ENCODE measurements at regions of chr6 and their contacts with region 1.

Region 1: GRCh38 chr6:11324453-11325015 is 92.1 kb upstream of the NEDD9 start:
- DNase-seq: no peak
- H3K4me3 ChIP-seq: no peak overlapping the region
- H3K27ac ChIP-seq: no peak overlapping the region
- H3K4me1 ChIP-seq: no peaks in the 10 kb centered on the region
- H3K27me3 ChIP-seq: no peaks in the 10 kb centered on the region
- CTCF ChIP-seq: no peak
- EP300 ChIP-seq: no peak
- POLR2A ChIP-seq: no peak

Region 2: GRCh38 chr6:11353921-11354389 is 29.4 kb after region 1 on chr6:
- intact Hi-C with region 1: no loop called
- DNase-seq: no peak
- H3K4me3 ChIP-seq: no peak overlapping the region
- H3K27ac ChIP-seq: peak overlapping the region in 3 of 4 donors; percentile 28 to 71 (median 59)
- H3K4me1 ChIP-seq: no peaks in the 10 kb centered on the region
- H3K27me3 ChIP-seq: no peaks in the 10 kb centered on the region
- CTCF ChIP-seq: no peak
- EP300 ChIP-seq: no peak
- POLR2A ChIP-seq: no peak

Region 3: DNA sequence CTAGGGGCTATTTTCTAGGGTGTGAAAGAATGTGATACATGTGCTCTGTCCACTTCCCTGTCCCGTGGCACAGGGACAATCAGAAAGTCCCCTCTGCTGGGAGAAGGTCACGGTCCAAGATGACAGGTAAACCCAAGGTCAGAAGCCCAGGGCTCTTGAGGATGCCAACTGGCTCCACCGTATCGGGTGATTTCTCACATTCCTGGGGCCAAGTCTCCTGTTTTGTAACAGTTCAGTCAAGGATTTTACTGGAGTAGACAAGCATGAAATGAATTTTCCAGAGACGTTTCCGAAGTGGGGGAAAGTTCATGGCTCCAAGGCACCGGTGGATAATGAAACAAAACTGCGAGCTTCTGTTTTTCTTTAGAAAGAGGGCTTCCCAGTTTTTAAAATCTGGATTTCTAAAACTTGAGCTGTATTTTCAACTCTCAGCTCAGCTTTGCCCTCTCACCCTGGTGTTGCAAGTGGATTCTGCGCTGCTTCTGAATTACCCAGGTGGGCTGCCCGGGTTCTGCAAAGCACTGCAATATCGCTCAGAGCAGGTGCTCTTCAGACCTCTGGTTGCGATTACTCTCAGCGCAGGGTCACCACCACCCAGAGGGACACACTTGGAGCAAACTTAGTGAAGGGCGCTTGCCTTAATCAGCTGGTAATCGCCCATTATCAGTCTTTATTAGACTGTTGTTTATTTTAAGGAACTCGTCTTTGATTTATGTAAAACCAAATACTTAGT is 148.6 kb after region 1 on chr6:
- intact Hi-C with region 1: loop called (anchors 10 kb)
- DNase-seq: no peak
- H3K4me3 ChIP-seq: peak overlapping the region in 3 of 4 donors; percentile 22 to 37 (median 30)
- H3K27ac ChIP-seq: peak overlapping the region in 2 of 4 donors; percentile 45 to 52
- H3K4me1 ChIP-seq: peaks cover 0 to 14% (median 6%) of the 10 kb centered on the region in 4 donors
- H3K27me3 ChIP-seq: no peaks in the 10 kb centered on the region
- CTCF ChIP-seq: no peak
- EP300 ChIP-seq: no peak
- POLR2A ChIP-seq: no peak